PC-3 (cell line): ENCODE measurements at regions of chr7 and their contacts with region 1.

Region 1: DNA sequence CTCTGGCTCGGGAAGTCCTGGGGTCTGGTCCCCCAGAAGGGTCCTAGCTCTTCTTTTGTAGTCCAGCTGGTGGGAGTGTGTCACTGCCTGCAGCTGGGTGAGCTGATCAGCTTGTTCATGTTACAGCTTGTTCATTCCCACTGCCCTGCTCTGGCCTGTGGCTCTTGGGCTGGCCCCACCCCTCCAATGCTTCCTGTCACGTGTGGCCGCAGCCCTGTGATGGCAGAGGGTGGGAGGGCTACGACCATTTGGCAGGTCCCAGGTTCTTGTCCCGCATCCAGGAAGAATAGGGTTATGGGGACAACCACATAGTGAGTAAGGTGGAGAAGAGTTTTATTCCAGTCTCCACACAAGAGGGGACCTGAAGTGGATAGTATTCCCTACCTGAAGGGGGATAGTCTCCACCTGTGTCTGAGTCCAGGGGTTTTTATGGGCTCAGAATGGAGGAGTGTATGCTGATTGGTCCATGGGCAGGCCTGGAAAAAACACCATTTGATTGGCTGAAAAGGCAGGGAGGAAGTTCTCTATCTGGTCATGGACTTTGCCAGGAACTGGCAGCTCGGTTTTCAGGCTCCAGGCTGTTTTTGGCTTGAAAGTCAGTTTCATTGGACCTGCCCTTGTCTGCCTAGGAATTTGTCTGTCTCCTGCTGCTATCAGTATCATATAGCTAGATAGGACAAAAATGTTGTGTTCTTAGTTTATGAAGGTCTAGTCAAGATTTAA is 13.1 kb downstream of the SDHAF3 start:
- DNase-seq: no peak
- ATAC-seq: no peak
- H3K4me3 ChIP-seq: no peak overlapping the region
- H3K27ac ChIP-seq: no peak overlapping the region
- H3K4me1 ChIP-seq: no peaks in the 10 kb centered on the region
- H3K27me3 ChIP-seq: no peaks in the 10 kb centered on the region
- CTCF ChIP-seq: no peak

Region 2: DNA sequence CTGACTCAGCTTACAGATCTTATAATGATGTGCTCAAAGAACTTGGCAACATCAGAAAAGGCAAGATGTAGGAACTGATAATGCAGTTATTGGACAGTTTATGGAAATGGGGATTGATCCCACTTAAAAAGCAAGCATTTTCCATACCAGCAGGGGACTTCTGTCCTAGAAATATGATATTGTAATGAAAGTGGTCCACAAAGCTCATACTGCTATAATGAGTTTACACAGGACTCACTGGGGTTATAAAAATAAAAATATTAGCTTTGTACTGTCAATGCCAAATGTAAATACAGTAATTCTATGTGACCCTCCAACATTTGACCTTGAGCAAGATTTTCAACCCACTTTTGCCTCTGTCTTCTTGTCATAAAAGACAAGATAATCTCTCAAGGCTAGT is 275.4 kb before region 1 on chr7:
- CTCF ChIA-PET with region 1: no interaction called
- POLR2A ChIA-PET with region 1: no interaction called
- intact Hi-C with region 1: no loop called
- DNase-seq: no peak
- ATAC-seq: no peak
- H3K4me3 ChIP-seq: no peak overlapping the region
- H3K27ac ChIP-seq: no peak overlapping the region
- H3K4me1 ChIP-seq: no peaks in the 10 kb centered on the region
- H3K27me3 ChIP-seq: no peaks in the 10 kb centered on the region
- CTCF ChIP-seq: no peak

Region 3: DNA sequence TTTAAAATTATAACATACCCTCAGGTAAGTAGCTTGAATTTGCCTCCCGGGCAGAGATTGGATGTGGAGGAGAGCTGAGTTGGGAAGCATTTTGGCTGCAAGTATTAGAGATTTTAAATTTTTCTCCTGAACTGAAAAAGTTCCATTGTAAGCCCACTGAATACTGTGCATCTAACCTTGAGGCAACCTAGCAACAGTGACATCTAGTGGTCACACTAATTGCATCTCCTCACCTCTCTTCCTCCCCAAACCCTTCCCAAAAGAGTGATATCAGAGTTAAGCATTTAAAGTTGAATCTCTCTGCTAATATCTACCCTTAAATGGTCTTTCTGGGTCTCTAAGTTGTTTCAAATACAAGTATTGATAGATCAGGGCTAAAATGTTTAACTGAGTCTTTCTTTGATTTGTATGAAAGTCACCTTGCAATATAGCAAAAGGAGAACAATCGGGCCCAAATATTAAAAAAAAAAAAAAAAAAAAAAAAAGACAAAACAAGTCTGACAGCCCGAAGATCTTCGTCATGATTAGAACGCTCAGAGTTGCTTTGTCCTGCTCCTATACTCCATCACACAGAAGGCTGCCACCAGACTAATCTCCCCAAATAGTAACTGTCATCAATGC is 65.5 kb before region 1 on chr7:
- CTCF ChIA-PET with region 1: no interaction called
- POLR2A ChIA-PET with region 1: no interaction called
- intact Hi-C with region 1: no loop called
- DNase-seq: peak; percentile 72
- ATAC-seq: peak; percentile 99
- H3K4me3 ChIP-seq: peak overlapping the region; percentile 61
- H3K27ac ChIP-seq: no peak overlapping the region
- H3K4me1 ChIP-seq: no peaks in the 10 kb centered on the region
- H3K27me3 ChIP-seq: no peaks in the 10 kb centered on the region
- CTCF ChIP-seq: peak; percentile 79

Region 4: GRCh38 chr7:97174303-97174702 is 43.7 kb after region 1 on chr7:
- CTCF ChIA-PET with region 1: no interaction called
- POLR2A ChIA-PET with region 1: no interaction called
- intact Hi-C with region 1: no loop called
- DNase-seq: no peak
- ATAC-seq: no peak
- H3K4me3 ChIP-seq: no peak overlapping the region
- H3K27ac ChIP-seq: no peak overlapping the region
- H3K4me1 ChIP-seq: no peaks in the 10 kb centered on the region
- H3K27me3 ChIP-seq: no peaks in the 10 kb centered on the region
- CTCF ChIP-seq: no peak

Region 5: DNA sequence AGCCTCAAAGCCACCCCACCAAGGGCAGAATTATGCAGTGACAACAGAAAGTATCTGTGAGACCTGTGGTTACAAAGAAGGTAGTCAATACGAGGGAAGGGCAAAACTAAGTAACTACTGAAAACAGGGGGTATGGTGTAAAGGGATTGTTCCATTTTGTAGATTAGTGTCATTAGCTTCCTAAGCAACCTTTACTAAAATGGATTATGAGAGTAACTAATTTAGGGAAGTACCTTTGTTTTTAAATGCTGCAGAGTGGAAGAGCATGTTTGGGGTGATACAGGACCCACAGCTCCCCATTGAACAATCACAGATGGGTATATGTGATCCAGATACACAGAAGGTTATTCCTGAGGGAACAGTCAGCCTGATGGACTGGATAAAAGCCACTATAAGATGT is 550.0 kb after region 1 on chr7:
- CTCF ChIA-PET with region 1: interaction called, 14 read pairs
- POLR2A ChIA-PET with region 1: no interaction called
- intact Hi-C with region 1: no loop called
- DNase-seq: no peak
- ATAC-seq: no peak
- H3K4me3 ChIP-seq: no peak overlapping the region
- H3K27ac ChIP-seq: no peak overlapping the region
- H3K4me1 ChIP-seq: no peaks in the 10 kb centered on the region
- H3K27me3 ChIP-seq: peaks cover 17% of the 10 kb centered on the region; the same call in 1 of the 2 replicates
- CTCF ChIP-seq: no peak